PC-9 (cell line): ENCODE measurements at regions of chr11 and their contacts with region 1.

Region 1: DNA sequence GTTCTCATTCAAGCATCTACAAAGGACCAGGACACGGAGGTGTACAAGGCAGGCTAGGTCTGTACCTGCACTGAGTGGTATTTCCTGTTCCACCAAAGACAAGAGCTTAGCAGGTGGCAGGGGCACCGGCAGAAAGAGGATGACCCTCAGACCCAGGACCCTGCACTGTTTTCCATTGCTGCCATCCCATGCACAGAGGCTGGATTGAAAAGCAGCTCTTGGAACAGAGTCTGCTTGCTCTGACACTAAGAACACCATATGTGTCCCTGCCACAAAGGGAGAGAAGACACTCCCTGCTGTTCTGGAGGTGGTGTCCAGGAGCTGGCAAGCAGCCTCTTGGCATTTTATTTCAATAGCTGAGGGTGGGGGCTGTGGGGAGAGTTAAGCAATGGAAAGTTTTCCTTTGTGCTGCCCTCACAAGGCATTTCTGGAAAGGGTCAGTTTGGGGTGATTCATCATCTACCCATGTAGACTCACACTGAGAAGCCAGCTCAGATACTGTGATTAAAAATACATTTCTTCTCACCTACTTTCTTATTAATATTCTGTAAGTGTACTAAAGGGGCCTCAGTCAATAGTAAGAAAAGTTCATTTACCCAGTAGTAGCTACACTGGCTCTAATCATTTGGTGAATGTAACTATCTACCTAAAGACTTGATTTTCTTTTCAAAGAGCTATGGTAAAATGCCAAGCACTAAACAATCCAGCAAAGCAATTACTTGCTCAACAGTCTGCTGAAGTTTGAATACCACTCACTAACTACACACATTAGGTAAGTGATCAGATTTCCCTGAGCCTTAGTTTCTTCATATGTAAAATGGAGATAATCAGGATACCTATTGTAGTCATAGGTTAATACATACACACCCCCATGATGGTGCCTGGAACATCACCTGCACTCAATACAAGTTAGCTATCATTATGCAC is 55.2 kb downstream of the SLC1A2 start:
- DNase-seq: peak; percentile 89 to 98
- H3K4me3 ChIP-seq: peak overlapping the region; percentile 22; the same call in 1 of the 2 replicates
- H3K27ac ChIP-seq: peak overlapping the region; percentile 84
- H3K4me1 ChIP-seq: peaks cover 40% of the 10 kb centered on the region
- H3K27me3 ChIP-seq: no peaks in the 10 kb centered on the region
- CTCF ChIP-seq: no peak

Region 2: DNA sequence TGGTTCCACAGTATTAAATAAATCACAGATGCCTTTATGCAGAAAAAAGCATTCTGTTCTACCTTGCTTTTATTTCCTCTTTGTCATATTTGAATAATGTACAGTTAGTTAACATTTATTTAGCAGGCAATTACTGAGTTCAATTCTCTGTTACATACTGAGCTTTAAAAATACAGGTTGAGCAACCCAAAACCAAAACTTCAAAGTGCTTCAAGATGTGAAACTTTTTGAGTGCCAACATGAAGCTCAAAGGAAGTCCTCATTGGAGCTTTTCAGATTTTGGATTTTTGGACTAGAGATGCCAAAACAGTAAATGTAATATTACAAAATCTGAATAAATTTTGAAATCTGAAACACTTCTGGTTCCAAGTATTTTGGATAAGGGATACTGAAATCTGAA is 393.6 kb before region 1 on chr11:
- CTCF ChIA-PET with region 1: no interaction called
- POLR2A ChIA-PET with region 1: interaction called, 12 read pairs
- intact Hi-C with region 1: no loop called
- DNase-seq: no peak
- H3K4me3 ChIP-seq: no peak overlapping the region
- H3K27ac ChIP-seq: no peak overlapping the region
- H3K4me1 ChIP-seq: peaks cover 12% of the 10 kb centered on the region
- H3K27me3 ChIP-seq: no peaks in the 10 kb centered on the region
- CTCF ChIP-seq: no peak

Region 3: GRCh38 chr11:35214792-35215193 is 149.3 kb before region 1 on chr11:
- CTCF ChIA-PET with region 1: no interaction called
- POLR2A ChIA-PET with region 1: no interaction called
- intact Hi-C with region 1: loop called (anchors 5 kb)
- DNase-seq: peak; percentile 58 to 89
- H3K4me3 ChIP-seq: no peak overlapping the region
- H3K27ac ChIP-seq: peak overlapping the region; percentile 64
- H3K4me1 ChIP-seq: peaks cover 67% of the 10 kb centered on the region
- H3K27me3 ChIP-seq: no peaks in the 10 kb centered on the region
- CTCF ChIP-seq: no peak

Region 4: GRCh38 chr11:35237860-35238715 is 126.0 kb before region 1 on chr11:
- CTCF ChIA-PET with region 1: interaction called, 3 read pairs
- POLR2A ChIA-PET with region 1: interaction called, 4 read pairs
- intact Hi-C with region 1: loop called (anchors 5 kb)
- DNase-seq: no peak
- H3K4me3 ChIP-seq: no peak overlapping the region
- H3K27ac ChIP-seq: no peak overlapping the region
- H3K4me1 ChIP-seq: peaks cover 33% of the 10 kb centered on the region
- H3K27me3 ChIP-seq: no peaks in the 10 kb centered on the region
- CTCF ChIP-seq: peak; percentile 82

Region 5: DNA sequence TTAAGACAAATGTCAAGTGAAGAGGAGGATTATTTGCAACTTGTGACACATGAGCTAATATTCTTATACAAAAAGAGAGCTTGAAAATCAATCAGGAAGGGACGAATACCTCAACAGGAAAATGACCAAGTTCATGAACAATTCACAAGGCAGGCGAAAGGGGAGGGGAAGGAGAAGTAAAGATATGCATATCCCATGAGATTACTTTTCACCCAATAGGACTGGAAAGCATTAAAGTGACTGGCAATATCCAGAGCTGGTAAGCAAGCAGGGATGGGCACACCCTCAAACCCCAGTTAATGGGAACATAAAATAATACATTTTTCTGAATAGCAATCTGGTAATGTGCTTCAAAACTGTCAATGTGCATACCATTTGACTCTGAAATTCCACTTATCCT is 74.3 kb before region 1 on chr11:
- CTCF ChIA-PET with region 1: interaction called, 4 read pairs
- POLR2A ChIA-PET with region 1: no interaction called
- intact Hi-C with region 1: loop called (anchors 2 kb)
- DNase-seq: no peak
- H3K4me3 ChIP-seq: no peak overlapping the region
- H3K27ac ChIP-seq: no peak overlapping the region
- H3K4me1 ChIP-seq: peaks cover 5% of the 10 kb centered on the region; the same call in 1 of the 2 replicates
- H3K27me3 ChIP-seq: no peaks in the 10 kb centered on the region
- CTCF ChIP-seq: no peak

Region 6: GRCh38 chr11:35321532-35322359 is 42.4 kb before region 1 on chr11:
- CTCF ChIA-PET with region 1: no interaction called
- POLR2A ChIA-PET with region 1: no interaction called
- intact Hi-C with region 1: no loop called
- DNase-seq: no peak
- H3K4me3 ChIP-seq: no peak overlapping the region
- H3K27ac ChIP-seq: no peak overlapping the region
- H3K4me1 ChIP-seq: peaks cover 21% of the 10 kb centered on the region; the same call in 1 of the 2 replicates
- H3K27me3 ChIP-seq: no peaks in the 10 kb centered on the region
- CTCF ChIP-seq: no peak